Testis (tissue), 5 donors: ENCODE measurements at regions of chr7 and their contacts with region 1.

Region 1: GRCh38 chr7:128425850-128426249 is 16.1 kb upstream of the IMPDH1 start:
- DNase-seq: peak; percentile 87
- H3K4me3 ChIP-seq: no peak overlapping the region
- H3K27ac ChIP-seq: no peak overlapping the region
- H3K4me1 ChIP-seq: peaks cover 3% of the 10 kb centered on the region
- H3K27me3 ChIP-seq: no peaks in the 10 kb centered on the region
- CTCF ChIP-seq: peak; percentile 68 to 93 (median 78)
- POLR2A ChIP-seq: no peak

Region 2: DNA sequence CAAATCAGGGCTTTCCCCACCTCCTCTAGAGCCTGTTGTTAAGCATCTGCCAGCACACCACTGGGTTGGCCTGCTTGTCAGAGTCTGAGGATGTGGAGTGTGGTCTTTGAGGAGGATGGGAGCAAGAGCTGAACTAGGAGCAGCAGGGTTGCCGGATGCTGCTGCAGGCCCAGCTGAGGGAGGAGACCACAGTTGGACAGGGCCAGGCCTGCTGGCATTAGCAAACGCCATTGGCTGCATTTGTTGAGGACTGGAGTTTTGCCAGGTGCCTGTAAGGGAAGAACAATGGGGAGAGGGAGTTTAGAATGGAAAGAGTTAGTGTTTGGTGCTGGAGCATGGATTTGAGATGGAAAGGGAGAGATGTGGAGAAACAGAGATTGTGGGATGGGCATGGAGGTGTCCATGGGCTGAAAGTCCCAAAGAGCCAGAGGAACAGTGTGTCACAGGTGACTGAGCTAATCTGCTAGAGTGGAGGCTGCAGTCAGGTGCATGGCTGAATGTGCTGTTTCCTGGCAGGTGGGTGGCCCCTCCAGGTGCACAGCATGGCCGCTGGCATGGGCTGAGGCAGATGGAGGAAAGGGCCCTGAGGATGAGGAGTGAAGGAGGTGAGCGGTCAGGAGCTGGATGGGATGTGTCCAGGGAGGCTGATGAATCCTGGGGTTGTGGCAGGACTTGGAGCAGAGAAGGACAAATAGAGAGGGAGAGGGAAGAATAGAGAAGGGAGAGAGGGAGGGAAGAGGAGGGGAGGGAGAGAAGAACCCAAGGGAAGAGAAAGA is 144.1 kb before region 1 on chr7:
- intact Hi-C with region 1: no loop called
- DNase-seq: no peak
- H3K4me3 ChIP-seq: no peak overlapping the region
- H3K27ac ChIP-seq: no peak overlapping the region
- H3K4me1 ChIP-seq: no peaks in the 10 kb centered on the region
- H3K27me3 ChIP-seq: no peaks in the 10 kb centered on the region
- CTCF ChIP-seq: no peak
- POLR2A ChIP-seq: no peak

Region 3: GRCh38 chr7:128462460-128462859 is 36.6 kb after region 1 on chr7:
- intact Hi-C with region 1: loop called (anchors 5 kb)
- DNase-seq: no peak
- H3K4me3 ChIP-seq: no peak overlapping the region
- H3K27ac ChIP-seq: no peak overlapping the region
- H3K4me1 ChIP-seq: peaks cover 16% of the 10 kb centered on the region
- H3K27me3 ChIP-seq: no peaks in the 10 kb centered on the region
- CTCF ChIP-seq: no peak
- POLR2A ChIP-seq: no peak